Prostate gland (tissue), 2 donors: ENCODE measurements at regions of chr16 and their contacts with region 1.

Region 1: DNA sequence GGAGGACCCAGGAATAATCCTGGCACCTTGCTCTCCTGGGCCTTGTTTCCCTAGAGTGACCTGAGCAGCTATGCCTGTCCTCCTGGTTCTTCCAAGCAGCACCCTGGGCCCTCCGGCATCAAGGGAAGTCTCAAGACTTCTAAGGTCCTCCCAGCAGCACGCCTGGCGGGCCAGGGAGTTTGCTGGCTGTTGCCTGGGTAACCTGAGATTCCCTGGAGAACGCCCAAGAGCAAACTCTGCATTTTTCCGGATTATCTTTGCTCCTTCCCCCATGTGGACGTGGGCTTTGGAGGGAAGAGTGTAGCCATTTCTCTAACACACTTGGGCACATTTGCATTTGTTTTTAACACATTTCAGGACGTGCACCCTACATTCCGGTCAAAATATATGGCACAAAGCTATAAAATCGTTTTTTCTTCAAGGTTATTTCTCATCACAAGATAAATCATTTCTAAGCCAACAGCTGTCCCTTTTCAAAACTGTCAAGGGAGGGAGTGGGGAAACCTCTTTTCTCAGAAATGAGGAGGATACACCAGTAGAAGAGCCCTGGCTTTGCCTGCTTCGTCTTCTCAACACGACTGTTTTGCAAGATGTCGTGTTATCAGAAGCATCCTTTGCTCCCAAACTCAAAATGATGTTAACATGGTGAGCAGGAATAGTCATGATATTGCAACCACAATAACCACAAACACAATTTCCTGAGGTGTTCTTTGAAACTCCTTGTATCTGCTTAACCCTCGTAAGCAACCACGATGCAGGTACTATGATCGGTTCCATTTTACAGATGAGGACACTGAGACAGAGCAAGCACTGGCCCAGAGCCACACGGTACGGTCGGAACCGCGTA is 116.5 kb downstream of the ADCY9 start:
- DNase-seq: no peak
- H3K4me3 ChIP-seq: no peak overlapping the region
- H3K27ac ChIP-seq: no peak overlapping the region
- H3K4me1 ChIP-seq: no peaks in the 10 kb centered on the region
- H3K27me3 ChIP-seq: no peaks in the 10 kb centered on the region
- CTCF ChIP-seq: no peak
- POLR2A ChIP-seq: no peak

Region 2: DNA sequence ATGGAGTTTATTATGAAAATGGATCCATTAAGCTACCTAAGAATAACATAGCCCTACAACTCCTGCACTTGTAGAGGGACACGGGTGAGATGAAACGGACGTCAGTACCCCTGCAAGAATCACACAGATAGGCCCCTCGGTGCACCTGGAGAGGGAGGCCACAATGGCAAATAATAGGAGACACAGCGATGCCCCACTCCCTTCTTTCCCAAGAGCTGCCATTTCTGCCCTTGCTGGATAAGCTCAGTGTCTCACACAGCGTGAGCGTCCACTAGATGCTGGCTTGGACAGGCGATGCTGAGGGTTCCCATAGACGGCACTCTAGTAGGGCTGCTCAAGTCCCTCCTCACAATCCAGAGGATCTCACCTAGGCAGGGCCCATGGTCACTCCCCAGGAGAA is 48.8 kb after region 1 on chr16:
- intact Hi-C with region 1: loop called (anchors 5 kb)
- DNase-seq: no peak
- H3K4me3 ChIP-seq: no peak overlapping the region
- H3K27ac ChIP-seq: no peak overlapping the region
- H3K4me1 ChIP-seq: no peaks in the 10 kb centered on the region
- H3K27me3 ChIP-seq: no peaks in the 10 kb centered on the region
- CTCF ChIP-seq: no peak
- POLR2A ChIP-seq: no peak

Region 3: GRCh38 chr16:4116337-4117249 is 116.9 kb after region 1 on chr16 and contains the start of gene ADCY9:
- intact Hi-C with region 1: loop called (anchors 5 kb)
- DNase-seq: peak; percentile 75
- H3K4me3 ChIP-seq: peak within 1 kb of the TSS; percentile 44 to 49
- H3K27ac ChIP-seq: peak within 1 kb of the TSS; percentile 47 to 60
- H3K4me1 ChIP-seq: no peaks in the 10 kb centered on the region
- H3K27me3 ChIP-seq: no peaks in the 10 kb centered on the region
- CTCF ChIP-seq: peak in 1 of 4 experiments; percentile 8
- POLR2A ChIP-seq: peak; percentile 32
- total RNA-seq, gene ADCY9: 7.2 to 58.3 TPM

Region 4: GRCh38 chr16:4253394-4254150 is 253.9 kb after region 1 on chr16:
- intact Hi-C with region 1: no loop called
- DNase-seq: peak; percentile 100
- H3K4me3 ChIP-seq: peak overlapping the region; percentile 43 to 47
- H3K27ac ChIP-seq: peak overlapping the region; percentile 84 to 92
- H3K4me1 ChIP-seq: no peaks in the 10 kb centered on the region
- H3K27me3 ChIP-seq: no peaks in the 10 kb centered on the region
- CTCF ChIP-seq: no peak
- POLR2A ChIP-seq: peak; percentile 86